Activated CD8-positive, alpha-beta memory T cell treated with anti-CD3 and anti-CD28 coated beads, Interleukin-2, amount 10 ng/mL, durations not matched to agents 7 days and 5 days (primary cell): ENCODE measurements at regions of chr12 and their contacts with region 1.

Region 1: GRCh38 chr12:68498732-68499131 is 112.0 kb upstream of the RAP1B start:
- DNase-seq: no peak
- ATAC-seq: no peak
- H3K4me3 Mint-ChIP-seq: no peak overlapping the region
- H3K27ac Mint-ChIP-seq: no peak overlapping the region
- H3K4me1 Mint-ChIP-seq: peaks cover 30% of the 10 kb centered on the region
- H3K27me3 Mint-ChIP-seq: no peaks in the 10 kb centered on the region

Region 2: DNA sequence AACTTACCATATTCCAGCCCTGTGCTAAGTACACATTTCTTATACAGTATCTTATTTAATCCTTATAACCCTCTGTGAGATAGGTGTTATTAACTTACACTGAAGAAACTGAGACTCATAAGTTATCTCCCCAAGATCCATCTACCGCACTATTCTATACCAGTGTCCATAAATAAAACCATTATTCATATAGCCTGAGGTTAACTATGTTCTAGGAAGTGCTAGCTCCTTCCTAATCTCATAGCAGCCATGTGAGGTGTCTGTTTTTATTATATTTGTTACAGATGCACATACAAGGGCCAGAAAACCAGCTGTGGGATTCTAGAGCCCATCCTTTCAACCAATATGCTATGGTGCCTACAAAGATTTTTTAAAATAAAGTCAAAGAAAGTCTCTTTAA is 11.7 kb after region 1 on chr12:
- CTCF ChIA-PET with region 1: interaction called, 10 read pairs
- DNase-seq: no peak
- ATAC-seq: no peak
- H3K4me3 Mint-ChIP-seq: no peak overlapping the region
- H3K27ac Mint-ChIP-seq: no peak overlapping the region
- H3K4me1 Mint-ChIP-seq: peaks cover 5% of the 10 kb centered on the region
- H3K27me3 Mint-ChIP-seq: no peaks in the 10 kb centered on the region